Left ventricle myocardium inferior (tissue), 1 donor: ENCODE measurements at regions of chrX and their contacts with region 1.

Region 1: GRCh38 chrX:70096052-70096451 is 33.8 kb downstream of the OTUD6A start:
- DNase-seq: no peak
- H3K4me3 ChIP-seq: no peak overlapping the region
- H3K27ac ChIP-seq: no peak overlapping the region
- H3K4me1 ChIP-seq: peaks cover 5% of the 10 kb centered on the region
- H3K27me3 ChIP-seq: no peaks in the 10 kb centered on the region
- CTCF ChIP-seq: peak; percentile 44

Region 2: GRCh38 chrX:69538321-69538876 is 557.7 kb before region 1 on chrX:
- intact Hi-C with region 1: loop called (anchors 5 kb)
- DNase-seq: peak; percentile 69
- H3K4me3 ChIP-seq: peak overlapping the region; percentile 64
- H3K27ac ChIP-seq: no peak overlapping the region
- H3K4me1 ChIP-seq: peaks cover 20% of the 10 kb centered on the region
- H3K27me3 ChIP-seq: no peaks in the 10 kb centered on the region
- CTCF ChIP-seq: peak; percentile 82

Region 3: GRCh38 chrX:69932323-69932722 is 163.7 kb before region 1 on chrX:
- intact Hi-C with region 1: no loop called
- DNase-seq: no peak
- H3K4me3 ChIP-seq: no peak overlapping the region
- H3K27ac ChIP-seq: no peak overlapping the region
- H3K4me1 ChIP-seq: peaks cover 3% of the 10 kb centered on the region
- H3K27me3 ChIP-seq: no peaks in the 10 kb centered on the region
- CTCF ChIP-seq: no peak

Region 4: GRCh38 chrX:70030301-70030767 is 65.7 kb before region 1 on chrX:
- intact Hi-C with region 1: loop called (anchors 10 kb)
- DNase-seq: no peak
- H3K4me3 ChIP-seq: no peak overlapping the region
- H3K27ac ChIP-seq: no peak overlapping the region
- H3K4me1 ChIP-seq: peaks cover 12% of the 10 kb centered on the region
- H3K27me3 ChIP-seq: no peaks in the 10 kb centered on the region
- CTCF ChIP-seq: peak; percentile 75

Region 5: GRCh38 chrX:70062076-70062475 is 34.0 kb before region 1 on chrX and contains the start of gene OTUD6A:
- intact Hi-C with region 1: no loop called
- DNase-seq: no peak
- H3K4me3 ChIP-seq: no peak within 1 kb of the TSS
- H3K27ac ChIP-seq: no peak within 1 kb of the TSS
- H3K4me1 ChIP-seq: no peaks in the 10 kb centered on the region
- H3K27me3 ChIP-seq: no peaks in the 10 kb centered on the region
- CTCF ChIP-seq: no peak
- total RNA-seq, gene OTUD6A: not detected